Adrenal gland (tissue), 19 donors: ENCODE measurements at regions of chr16 and their contacts with region 1.

Region 1: DNA sequence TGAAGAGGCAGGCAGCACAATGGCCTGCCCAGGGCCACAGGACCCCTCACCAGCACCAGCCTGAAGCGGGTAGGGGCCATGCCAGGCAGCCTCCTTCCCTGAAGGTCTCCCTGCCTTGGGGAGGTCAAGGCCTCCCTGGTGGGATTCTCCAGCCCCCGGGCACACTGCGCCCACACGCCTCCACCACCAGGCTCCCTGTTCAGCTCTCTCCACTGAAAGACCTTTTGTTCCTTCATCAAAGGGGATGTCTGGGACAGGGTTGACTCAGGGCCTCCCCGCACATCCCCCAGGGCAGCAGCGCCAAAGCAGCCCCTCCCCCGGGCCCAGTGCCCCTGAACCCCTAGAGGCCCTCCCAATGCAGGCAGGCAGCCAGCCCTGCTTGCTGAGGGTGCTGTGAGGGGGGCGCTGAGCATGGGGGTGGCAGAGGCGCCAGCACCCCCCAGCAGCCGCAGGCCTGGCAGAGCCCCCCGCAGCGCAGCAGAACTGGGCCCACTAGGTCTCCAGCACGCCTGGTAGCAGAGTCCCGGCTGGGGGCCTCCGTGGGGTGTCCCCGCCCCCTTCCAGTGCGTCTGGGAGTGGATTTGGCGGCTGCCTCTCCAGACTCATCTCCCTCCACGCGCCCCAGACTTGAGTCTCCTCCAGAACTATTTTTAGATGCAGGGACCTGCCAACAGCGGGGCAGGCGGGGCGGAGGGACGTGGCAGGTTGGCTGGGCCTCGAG is 13.1 kb downstream of the BCAR1 start:
- DNase-seq: peak; percentile 87 to 97 (median 94)
- H3K4me3 ChIP-seq: peak overlapping the region in 1 of 4 donors; percentile 2
- H3K27ac ChIP-seq: peak overlapping the region in 4 of 5 donors; percentile 68 to 95 (median 88)
- H3K4me1 ChIP-seq: peaks cover 18 to 34% of the 10 kb centered on the region in 2 donors
- H3K27me3 ChIP-seq: no peaks in the 10 kb centered on the region
- CTCF ChIP-seq: peak in 1 of 6 experiments; percentile 29
- POLR2A ChIP-seq: no peak

Region 2: DNA sequence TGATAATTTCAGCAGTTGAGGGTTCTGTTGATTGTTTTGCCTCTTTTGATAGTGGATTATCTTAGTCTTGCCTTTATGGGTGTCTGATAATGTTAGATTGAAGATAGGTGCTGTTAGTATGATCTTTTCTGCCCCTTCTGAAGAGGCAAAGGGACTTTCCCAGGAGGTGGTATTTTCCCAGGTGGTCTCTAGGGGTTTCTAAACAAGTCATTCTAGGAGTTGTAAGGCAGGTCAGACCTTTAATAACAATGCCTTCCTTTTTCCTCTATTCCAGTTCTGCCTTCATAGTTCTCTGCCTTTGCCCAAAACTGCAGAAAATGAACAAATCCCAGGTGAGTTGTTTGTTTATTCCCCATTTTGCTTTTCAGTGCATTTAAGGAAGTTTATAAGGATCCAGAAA is 85.7 kb before region 1 on chr16:
- intact Hi-C with region 1: no loop called
- DNase-seq: no peak
- H3K4me3 ChIP-seq: no peak overlapping the region
- H3K27ac ChIP-seq: no peak overlapping the region
- H3K4me1 ChIP-seq: no peaks in the 10 kb centered on the region
- H3K27me3 ChIP-seq: no peaks in the 10 kb centered on the region
- CTCF ChIP-seq: no peak
- POLR2A ChIP-seq: no peak

Region 3: GRCh38 chr16:75188832-75189510 is 49.3 kb before region 1 on chr16:
- intact Hi-C with region 1: no loop called
- DNase-seq: peak in 1 of 7 donors; percentile 21
- H3K4me3 ChIP-seq: no peak overlapping the region
- H3K27ac ChIP-seq: no peak overlapping the region
- H3K4me1 ChIP-seq: no peaks in the 10 kb centered on the region
- H3K27me3 ChIP-seq: no peaks in the 10 kb centered on the region
- CTCF ChIP-seq: no peak
- POLR2A ChIP-seq: no peak

Region 4: GRCh38 chr16:75385507-75386152 is 147.3 kb after region 1 on chr16:
- intact Hi-C with region 1: loop called in 1 of 2 experiments (anchors 5 kb)
- DNase-seq: peak in 1 of 7 donors; percentile 27
- H3K4me3 ChIP-seq: no peak overlapping the region
- H3K27ac ChIP-seq: no peak overlapping the region
- H3K4me1 ChIP-seq: peaks cover 4 to 35% of the 10 kb centered on the region in 2 donors
- H3K27me3 ChIP-seq: no peaks in the 10 kb centered on the region
- CTCF ChIP-seq: peak; percentile 61 to 92 (median 82)
- POLR2A ChIP-seq: no peak

Region 5: GRCh38 chr16:75398333-75398732 is 160.0 kb after region 1 on chr16:
- intact Hi-C with region 1: loop called in 1 of 2 experiments (anchors 5 kb)
- DNase-seq: peak in 3 of 7 donors; percentile 52 to 75 (median 54)
- H3K4me3 ChIP-seq: no peak overlapping the region
- H3K27ac ChIP-seq: peak overlapping the region in 1 of 5 donors; percentile 9
- H3K4me1 ChIP-seq: peaks cover 6 to 20% of the 10 kb centered on the region in 2 donors
- H3K27me3 ChIP-seq: no peaks in the 10 kb centered on the region
- CTCF ChIP-seq: no peak
- POLR2A ChIP-seq: no peak